Vagina (tissue), 2 donors: ENCODE measurements at regions of chr2 and their contacts with region 1.

Region 1: DNA sequence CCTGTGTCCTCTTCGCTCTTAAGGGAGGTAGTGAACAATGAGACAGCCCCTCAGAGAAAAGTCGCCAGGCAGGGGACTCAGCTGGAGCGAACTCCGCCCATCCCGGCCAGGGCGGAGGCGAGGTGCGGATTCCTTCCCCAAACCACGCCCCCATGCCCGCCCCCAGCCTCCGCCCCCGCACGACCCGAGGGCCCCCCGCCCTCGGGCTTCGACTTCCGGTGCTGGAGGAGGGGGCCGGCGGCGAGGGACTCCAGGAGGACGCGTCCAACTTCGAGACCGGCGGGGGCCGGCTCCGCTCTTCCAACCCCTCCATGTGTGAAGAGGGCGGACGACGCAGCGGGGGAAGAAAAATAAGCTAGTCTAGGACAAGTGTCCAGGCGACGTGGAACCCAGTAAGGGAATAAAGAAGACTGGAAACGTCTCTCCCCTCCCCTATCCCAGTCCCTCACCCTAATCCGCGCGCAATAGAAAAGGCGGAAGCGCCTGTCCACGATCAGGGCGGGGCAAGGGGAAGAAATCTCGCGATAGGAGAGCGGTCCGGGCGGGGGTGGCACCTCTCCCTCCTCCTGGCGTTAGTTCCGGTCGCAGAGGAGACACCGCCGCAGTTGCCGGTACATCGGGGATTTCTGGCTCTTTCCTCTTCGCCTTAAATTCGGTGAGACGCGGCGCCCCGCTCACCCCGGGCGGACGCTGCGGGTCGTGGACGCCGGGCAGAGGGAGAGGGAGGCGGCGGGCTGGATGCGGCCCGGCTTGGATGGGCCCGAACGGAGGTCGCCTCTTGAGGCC is at the start of gene BZW1:
- DNase-seq: peak in 1 of 2 donors; percentile 96
- H3K4me3 ChIP-seq: peak within 1 kb of the TSS; percentile 90 to 99
- H3K27ac ChIP-seq: peak within 1 kb of the TSS; percentile 96
- H3K4me1 ChIP-seq: peaks cover 42% of the 10 kb centered on the region
- H3K27me3 ChIP-seq: no peaks in the 10 kb centered on the region
- CTCF ChIP-seq: no peak
- POLR2A ChIP-seq: peak in 1 of 2 donors; percentile 92
- total RNA-seq, gene BZW1: 128 TPM

Region 2: GRCh38 chr2:200713003-200713703 is 98.4 kb before region 1 on chr2:
- intact Hi-C with region 1: loop called (anchors 2 kb)
- DNase-seq: peak in 1 of 2 donors; percentile 93
- H3K4me3 ChIP-seq: peak overlapping the region; percentile 34 to 48
- H3K27ac ChIP-seq: peak overlapping the region; percentile 66
- H3K4me1 ChIP-seq: peaks cover 4% of the 10 kb centered on the region
- H3K27me3 ChIP-seq: no peaks in the 10 kb centered on the region
- CTCF ChIP-seq: peak; percentile 74 to 82 (median 79)
- POLR2A ChIP-seq: peak in 1 of 2 donors; percentile 68

Region 3: DNA sequence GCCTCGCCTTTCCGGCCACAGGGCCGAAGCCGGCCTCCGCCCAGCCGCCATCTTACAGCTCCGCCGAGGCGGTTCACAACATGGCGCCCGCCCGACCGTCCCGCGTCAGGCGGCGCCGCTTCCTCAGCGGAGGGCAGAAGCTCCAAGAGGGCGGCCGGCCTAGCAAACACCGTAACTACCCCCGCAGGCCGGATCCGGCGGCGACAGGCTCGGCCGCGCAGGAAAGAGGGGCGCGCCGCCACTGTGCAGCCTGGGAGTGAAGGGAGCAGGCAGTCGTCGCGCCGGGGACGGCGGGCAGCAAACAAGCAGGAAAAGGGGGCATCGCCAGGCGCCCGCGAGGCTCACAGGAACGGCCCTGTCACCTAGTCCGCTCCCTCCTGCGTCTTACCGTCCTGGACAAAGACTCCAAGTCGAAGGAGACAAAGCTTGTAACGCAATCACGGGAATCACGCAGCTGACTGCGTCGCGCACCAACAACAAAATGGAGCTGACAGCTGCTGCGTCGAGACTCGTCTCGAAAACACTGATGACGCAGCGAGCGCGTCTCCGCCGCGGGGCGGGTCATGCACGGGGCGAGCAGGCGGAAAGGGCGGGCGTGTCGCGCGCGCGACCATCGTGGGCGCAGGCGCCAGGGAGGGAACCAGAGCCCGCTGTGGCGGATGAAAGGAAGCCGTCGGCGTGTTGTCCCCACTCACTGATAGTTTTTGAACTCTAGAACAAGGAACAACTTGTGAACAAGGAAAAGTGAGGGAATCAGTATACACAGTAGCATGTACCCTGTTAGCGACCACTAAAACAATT is 52.8 kb after region 1 on chr2 and contains the start of gene CLK1:
- intact Hi-C with region 1: loop called (anchors 5 kb)
- DNase-seq: peak in 1 of 2 donors; percentile 98
- H3K4me3 ChIP-seq: peak within 1 kb of the TSS; percentile 60 to 100
- H3K27ac ChIP-seq: peak within 1 kb of the TSS; percentile 100
- H3K4me1 ChIP-seq: peaks cover 55% of the 10 kb centered on the region
- H3K27me3 ChIP-seq: no peaks in the 10 kb centered on the region
- CTCF ChIP-seq: peak in 1 of 3 experiments; percentile 16
- POLR2A ChIP-seq: peak; percentile 94 to 99
- total RNA-seq, gene CLK1: 184 TPM